ENCODE measurements at regions of chr7 and their contacts with region 1.

Region 1: DNA sequence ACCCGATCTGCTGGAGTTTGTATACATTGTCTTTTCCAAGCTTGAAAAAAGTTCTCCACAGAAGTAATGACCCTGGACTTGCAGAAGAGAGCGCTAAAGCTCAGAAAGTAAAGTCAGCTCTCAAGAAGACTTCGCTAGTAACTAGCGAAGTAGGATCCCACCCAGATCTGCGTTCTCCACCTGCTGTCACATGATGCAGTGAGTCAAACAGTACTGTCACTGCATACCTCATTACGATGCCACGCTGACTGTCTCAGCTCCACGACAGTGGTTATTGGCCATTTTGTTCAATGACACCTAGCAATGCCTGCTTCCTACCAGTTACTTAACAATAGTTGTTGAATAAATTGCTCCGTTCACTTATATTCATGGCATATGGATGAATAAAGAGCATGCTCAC is 29.7 kb upstream of the SEC61G start:
- DNase-seq: peak in 1 of 2 experiments; percentile 47
- H3K4me3 ChIP-seq: no peak overlapping the region
- H3K27ac ChIP-seq: no peak overlapping the region
- H3K4me1 ChIP-seq: 0 out of 7 replicates have a peak, but pooled peaks cover 0 to 2% (median 0%) of the 10 kb centered on the region in 4 experiments
- H3K27me3 ChIP-seq: no peaks in the 10 kb centered on the region; a peak in 2 of 7 replicates
- CTCF ChIP-seq: peak in 2 of 3 experiments; percentile 69 to 79; a peak in 3 of 4 replicates
- EP300 ChIP-seq: no peak
- POLR2A ChIP-seq: no peak
- RAD21 ChIP-seq: peak; percentile 90 to 91

Region 2: DNA sequence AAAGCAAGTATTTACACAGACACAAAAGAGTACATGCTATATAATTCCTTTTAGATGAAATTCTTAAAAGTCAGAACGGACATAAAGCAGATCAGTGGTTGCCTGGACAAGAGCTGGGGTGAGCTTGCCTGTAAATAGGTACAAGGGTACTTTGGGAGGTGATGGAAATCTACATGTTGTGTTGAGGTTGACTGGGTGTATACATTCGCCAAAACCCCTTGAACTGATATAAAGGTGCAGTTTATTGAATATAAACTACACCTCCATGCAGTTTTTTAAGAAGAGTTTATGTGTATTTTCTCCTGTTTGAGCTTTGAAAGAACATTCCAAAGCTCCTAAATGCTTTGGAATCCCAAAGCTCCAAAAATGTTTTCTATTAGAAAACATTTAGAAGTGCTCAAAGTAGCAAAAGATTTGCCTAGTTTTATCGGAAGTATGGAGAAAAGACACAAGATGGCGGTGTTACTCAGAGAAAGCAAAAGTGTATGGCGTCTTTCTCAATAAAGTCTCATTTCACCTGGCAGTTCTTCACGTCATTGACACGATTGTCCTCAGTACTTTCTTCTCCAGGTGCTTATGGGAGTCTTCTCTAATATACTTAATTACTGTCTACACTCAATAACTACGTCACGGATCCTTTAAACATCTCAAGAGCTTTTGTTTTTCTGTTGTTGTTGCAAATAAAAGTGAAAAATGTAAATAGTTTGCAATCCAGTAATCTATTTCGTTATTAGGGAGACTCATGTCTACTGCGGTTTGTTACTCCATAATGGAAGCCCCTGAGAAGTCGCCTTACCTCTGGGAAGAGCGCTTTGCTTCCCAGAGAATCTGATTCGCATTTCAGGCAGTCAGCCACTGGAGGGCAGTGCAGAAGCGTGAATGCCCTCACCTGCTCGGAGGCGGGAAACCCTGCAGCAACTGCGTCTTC is 14.9 kb before region 1 on chr7:
- CTCF ChIA-PET with region 1: interaction called, 10 read pairs
- POLR2A ChIA-PET with region 1: interaction called, 3 read pairs
- DNase-seq: peak; percentile 81 to 91
- H3K4me3 ChIP-seq: peak overlapping the region in 1 of 4 experiments; percentile 7; a peak in 1 of 8 replicates
- H3K27ac ChIP-seq: no peak overlapping the region
- H3K4me1 ChIP-seq: no peaks in the 10 kb centered on the region
- H3K27me3 ChIP-seq: no peaks in the 10 kb centered on the region
- CTCF ChIP-seq: peak; percentile 85 to 94 (median 89)
- EP300 ChIP-seq: no peak
- POLR2A ChIP-seq: no peak
- RAD21 ChIP-seq: peak; percentile 97 to 98

Region 3: DNA sequence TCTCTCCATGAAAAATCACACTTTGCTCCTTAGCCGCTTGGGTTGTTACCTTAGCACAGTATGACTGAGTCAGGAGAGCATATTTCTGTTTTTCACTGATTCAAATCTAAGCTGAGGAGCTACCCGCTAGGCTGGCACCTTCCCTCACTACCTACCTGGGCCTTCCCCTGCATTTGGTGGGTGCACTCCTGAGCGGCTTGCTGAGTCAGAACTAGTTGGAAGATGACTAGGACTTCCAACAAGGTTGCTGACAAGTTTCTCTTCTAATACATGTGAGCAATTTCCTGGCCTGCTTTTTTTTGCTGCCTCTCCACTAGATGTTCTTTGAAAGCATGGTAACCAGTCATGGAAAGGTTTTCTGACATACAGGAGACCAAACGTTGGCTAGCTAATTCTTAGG is 14.2 kb after region 1 on chr7:
- CTCF ChIA-PET with region 1: interaction called, 16 read pairs
- POLR2A ChIA-PET with region 1: no interaction called
- DNase-seq: no peak
- H3K4me3 ChIP-seq: no peak overlapping the region
- H3K27ac ChIP-seq: no peak overlapping the region
- H3K4me1 ChIP-seq: no peaks in the 10 kb centered on the region; a peak in 1 of 7 replicates
- H3K27me3 ChIP-seq: no peaks in the 10 kb centered on the region
- CTCF ChIP-seq: no peak
- EP300 ChIP-seq: no peak
- POLR2A ChIP-seq: no peak
- RAD21 ChIP-seq: no peak

Measured in H1 (cell line).